ENCODE measurements at regions of chr9 and their contacts with region 1.

Region 1: DNA sequence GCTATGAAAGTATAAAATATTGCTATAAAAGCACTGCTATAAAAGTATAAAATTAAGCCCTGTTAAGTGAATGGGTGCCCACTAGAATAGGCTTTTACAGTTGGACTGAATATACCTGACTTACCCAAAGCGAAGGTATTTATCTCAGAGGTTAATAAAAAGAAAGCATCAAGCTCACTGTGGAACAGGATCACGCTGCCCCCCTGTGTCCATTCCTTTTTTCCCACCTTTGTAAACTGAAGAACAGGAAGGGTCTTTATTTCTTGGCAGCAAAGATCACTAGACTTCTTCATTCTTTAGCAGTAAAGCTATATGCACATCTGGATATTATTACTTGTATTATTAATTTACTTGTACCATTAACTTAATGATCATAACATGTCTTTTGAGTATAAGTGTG is 22.1 kb upstream of the PLPP6 start:
- DNase-seq: peak in 1 of 3 donors; percentile 45
- ATAC-seq: no peak
- H3K4me3 ChIP-seq: no peak overlapping the region
- H3K27ac ChIP-seq: no peak overlapping the region
- H3K4me1 ChIP-seq: no peaks in the 10 kb centered on the region
- H3K27me3 ChIP-seq: no peaks in the 10 kb centered on the region

Region 2: DNA sequence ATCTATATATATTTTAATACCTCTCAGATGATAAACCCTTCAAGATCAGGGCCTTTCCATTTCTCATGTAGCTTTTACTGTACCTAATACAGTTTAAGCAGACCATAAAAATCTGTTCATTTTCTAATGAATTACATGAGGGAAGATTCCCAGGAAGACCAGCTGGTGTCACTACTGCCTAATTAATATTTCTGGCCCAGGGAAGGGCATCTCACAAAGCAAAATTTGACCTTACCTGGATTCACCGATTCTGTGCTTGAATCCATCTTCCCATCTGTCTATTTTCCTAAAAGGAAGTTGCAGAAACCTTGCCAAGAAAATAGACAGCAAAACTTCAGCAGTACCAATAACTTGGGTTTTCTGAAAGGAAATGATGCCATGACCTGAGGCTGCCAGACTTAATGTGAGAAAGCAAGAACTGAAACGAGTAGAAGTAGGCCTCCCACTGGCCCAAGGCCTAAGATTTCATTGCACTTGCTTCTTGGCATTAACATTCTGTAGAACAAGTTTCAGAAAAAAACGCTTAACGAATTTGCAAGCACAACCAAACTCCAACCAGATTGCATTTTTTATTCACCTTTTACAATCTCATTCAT is 257.2 kb before region 1 on chr9:
- intact Hi-C with region 1: loop called (anchors 5 to 10 kb)
- DNase-seq: no peak
- ATAC-seq: peak in 1 of 2 donors; percentile 58
- H3K4me3 ChIP-seq: no peak overlapping the region
- H3K27ac ChIP-seq: no peak overlapping the region
- H3K4me1 ChIP-seq: peaks cover 2% of the 10 kb centered on the region
- H3K27me3 ChIP-seq: no peaks in the 10 kb centered on the region

Region 3: DNA sequence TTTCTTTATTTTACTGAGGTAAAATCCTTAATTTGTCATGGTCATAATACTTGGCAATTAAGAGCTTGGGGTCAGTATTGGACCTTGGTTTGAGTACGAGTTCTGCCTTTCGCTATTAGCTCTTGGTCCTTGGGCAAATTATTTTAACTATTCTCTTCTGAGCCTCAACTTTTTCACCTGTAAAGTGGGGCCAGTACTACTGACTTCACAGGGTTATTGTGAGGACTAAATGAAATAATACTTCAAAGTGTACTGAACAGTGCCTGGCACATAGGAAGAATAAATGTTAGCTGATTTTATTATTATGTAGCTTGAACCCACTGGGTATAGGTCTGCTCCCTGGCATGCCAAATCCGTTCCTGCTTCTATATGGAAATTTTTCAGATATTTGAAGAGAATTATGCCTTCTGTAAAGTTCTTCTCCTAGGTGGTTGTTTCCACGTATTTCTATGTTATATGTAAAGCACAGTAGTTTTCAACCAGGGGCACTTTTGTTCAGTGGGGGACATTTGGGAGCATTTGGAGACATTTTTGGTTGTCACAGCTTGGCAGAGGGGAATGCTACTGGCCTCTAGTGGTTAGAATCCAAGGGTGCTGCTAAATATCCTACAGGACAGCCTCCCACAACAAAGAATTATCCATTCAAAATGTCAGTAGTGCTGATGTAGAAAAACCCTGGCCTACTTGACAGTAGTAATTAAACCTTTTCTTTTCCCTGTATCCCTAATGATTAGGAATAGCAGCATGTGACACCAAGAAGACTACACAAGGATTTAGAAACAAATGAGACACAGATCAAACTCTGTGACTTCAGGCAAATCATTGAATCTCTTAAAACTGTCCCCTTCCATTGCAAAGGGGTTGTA is 157.2 kb after region 1 on chr9:
- intact Hi-C with region 1: no loop called
- DNase-seq: no peak
- ATAC-seq: no peak
- H3K4me3 ChIP-seq: no peak overlapping the region
- H3K27ac ChIP-seq: no peak overlapping the region
- H3K4me1 ChIP-seq: peaks cover 7% of the 10 kb centered on the region
- H3K27me3 ChIP-seq: no peaks in the 10 kb centered on the region